Aorta (tissue), 5 donors: ENCODE measurements at regions of chr1 and their contacts with region 1.

Region 1: DNA sequence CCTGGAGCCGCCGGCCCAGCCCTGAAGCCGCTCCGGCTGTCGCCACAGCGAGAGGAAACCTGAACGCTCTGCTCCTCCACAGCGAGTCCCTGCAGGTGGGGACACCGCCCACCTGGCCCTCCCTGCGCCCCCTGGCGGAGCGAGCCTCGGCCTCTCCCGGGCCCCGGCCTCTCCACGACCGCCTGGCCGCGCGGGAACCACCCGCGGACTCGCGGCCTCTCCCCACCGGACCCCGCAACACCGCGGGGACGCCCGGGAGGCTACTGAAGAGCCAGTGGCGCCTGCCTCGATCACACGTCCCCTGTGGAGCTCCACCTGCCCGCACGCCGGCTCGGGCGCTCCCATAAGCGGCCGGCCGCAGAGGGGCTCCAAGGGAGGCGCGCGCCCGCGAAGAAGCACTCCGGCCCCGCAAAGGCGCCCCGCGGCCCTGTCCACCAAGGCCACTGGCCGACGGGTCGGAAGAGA is 109.6 kb downstream of the KCNN3 start:
- DNase-seq: peak; percentile 63 to 88
- ATAC-seq: peak; percentile 82
- H3K4me3 ChIP-seq: no peak overlapping the region
- H3K27ac ChIP-seq: no peak overlapping the region
- H3K4me1 ChIP-seq: no peaks in the 10 kb centered on the region
- H3K27me3 ChIP-seq: no peaks in the 10 kb centered on the region

Region 2: GRCh38 chr1:154567386-154568156 is 192.9 kb before region 1 on chr1 and contains the start of gene CHRNB2:
- intact Hi-C with region 1: loop called in 1 of 2 experiments (anchors 5 kb)
- DNase-seq: peak; percentile 65 to 89
- ATAC-seq: peak; percentile 89
- H3K4me3 ChIP-seq: no peak within 1 kb of the TSS
- H3K27ac ChIP-seq: no peak within 1 kb of the TSS
- H3K4me1 ChIP-seq: no peaks in the 10 kb centered on the region
- H3K27me3 ChIP-seq: no peaks in the 10 kb centered on the region
- total RNA-seq, gene CHRNB2: not detected

Region 3: DNA sequence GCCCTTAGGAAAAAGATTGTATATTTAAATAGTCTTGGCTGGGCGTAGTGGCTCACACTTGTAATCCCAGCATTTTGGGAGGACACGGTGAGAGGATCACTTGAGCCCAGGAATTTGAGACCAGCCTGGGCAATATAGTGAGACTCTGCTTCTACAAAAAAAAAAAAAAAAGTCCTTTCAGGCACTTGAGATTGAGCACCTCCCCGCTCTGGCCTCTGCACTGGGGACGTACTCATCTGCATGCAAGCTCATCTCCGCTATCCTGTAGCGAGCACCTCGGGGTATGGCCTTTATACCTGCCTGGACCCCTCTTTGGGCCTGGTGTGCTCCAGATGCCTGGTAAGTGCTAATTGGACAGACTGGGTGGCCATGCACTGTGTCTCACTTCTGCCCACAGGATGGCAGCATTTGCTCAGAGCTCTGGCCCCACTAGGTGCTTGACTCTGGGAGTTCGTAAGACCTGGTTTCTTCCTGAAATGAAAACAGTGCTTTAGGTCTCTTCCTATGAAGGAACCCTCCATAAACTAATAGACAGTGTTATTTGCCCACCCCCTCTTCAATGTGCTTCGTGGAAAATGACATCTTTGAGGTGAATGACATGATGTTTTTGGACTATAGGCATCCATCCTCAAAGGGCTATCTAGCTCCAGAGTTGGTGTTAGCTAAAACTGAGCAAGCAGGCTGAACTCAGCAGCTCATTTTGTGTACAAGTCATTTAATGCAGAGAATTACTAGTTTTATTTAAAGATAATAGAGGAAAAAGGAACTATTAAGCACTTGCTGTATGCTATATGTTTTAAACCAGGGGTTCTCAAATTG is 90.8 kb before region 1 on chr1:
- intact Hi-C with region 1: loop called in 1 of 2 experiments (anchors 10 kb)
- DNase-seq: peak; percentile 78 to 81
- ATAC-seq: peak; percentile 84
- H3K4me3 ChIP-seq: no peak overlapping the region
- H3K27ac ChIP-seq: no peak overlapping the region
- H3K4me1 ChIP-seq: no peaks in the 10 kb centered on the region
- H3K27me3 ChIP-seq: no peaks in the 10 kb centered on the region

Region 4: DNA sequence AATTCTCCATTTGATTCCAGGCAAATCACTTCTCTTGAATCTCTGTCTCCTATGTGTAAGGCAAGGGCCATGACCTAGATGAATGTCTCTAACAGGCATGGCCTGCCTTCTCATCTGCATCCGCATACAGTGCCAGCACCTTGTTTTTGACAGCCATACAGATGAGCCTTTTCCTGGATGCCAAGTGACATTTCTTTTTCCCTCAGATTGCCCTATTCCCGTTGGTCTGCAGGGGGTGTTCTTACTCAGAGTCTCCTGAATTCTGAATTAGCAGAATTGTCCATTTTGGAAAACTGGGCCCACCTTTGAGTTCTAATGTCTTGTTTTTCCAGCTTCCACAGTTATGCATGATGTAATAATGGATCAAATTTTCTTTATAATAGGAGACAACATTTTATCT is 64.5 kb before region 1 on chr1:
- intact Hi-C with region 1: no loop called
- DNase-seq: no peak
- ATAC-seq: no peak
- H3K4me3 ChIP-seq: no peak overlapping the region
- H3K27ac ChIP-seq: no peak overlapping the region
- H3K4me1 ChIP-seq: no peaks in the 10 kb centered on the region
- H3K27me3 ChIP-seq: peaks cover 0 to 3% of the 10 kb centered on the region in 2 donors

Region 5: GRCh38 chr1:154729031-154729442 is 31.5 kb before region 1 on chr1:
- intact Hi-C with region 1: loop called in 1 of 2 experiments (anchors 2 kb)
- DNase-seq: no peak
- ATAC-seq: no peak
- H3K4me3 ChIP-seq: no peak overlapping the region
- H3K27ac ChIP-seq: no peak overlapping the region
- H3K4me1 ChIP-seq: no peaks in the 10 kb centered on the region
- H3K27me3 ChIP-seq: no peaks in the 10 kb centered on the region